ENCODE measurements at regions of chr5 and their contacts with region 1.

Region 1: DNA sequence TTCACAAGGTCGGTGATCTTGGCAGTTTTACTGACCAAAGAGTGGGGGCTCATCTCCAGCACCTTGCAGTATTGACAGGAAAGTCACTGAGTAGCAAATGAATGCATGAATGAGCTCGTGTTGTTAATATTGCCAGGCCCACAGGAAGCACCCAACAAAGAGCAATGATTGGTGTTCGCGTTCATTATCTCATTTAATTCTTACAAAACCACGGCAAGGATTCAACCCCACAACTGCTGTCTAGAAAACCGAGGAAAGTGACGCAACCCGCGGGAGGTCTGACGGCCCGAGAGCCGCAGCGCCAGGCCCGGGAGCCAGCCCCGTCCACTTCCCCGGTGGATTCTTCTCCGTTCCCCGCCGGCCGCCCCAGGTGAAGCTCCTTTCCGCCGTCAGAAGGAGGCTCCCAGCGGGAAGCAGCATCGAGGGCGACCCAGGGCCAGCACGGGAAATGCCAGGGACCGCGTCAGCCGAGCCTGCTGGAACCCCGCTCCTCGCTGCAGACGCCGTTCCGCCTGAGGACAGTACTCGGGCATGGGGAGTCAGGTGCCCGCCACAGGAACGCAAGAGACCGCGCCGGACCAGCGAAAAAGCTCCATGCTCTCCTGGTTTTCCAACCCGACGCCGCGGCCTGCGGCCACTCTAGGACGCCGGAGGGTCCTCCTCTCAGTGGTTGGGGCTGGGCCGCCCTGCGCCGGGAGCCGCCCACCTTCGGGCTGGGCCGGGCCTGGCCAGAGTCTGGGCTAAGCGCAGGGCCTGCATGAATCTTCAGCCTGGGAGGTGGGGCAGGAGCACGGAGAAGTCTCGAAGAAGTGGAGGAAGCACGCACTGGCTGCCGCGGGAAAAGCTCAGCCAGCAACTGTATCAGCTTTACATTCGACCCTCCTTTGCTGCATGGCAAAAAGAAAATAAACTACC is 19.8 kb upstream of the FER start:
- DNase-seq: peak; percentile 39
- H3K4me3 Mint-ChIP-seq: peak overlapping the region; percentile 69
- H3K27ac Mint-ChIP-seq: no peak overlapping the region
- H3K4me1 Mint-ChIP-seq: peaks cover 25% of the 10 kb centered on the region
- H3K27me3 Mint-ChIP-seq: peaks cover 46% of the 10 kb centered on the region

Region 2: DNA sequence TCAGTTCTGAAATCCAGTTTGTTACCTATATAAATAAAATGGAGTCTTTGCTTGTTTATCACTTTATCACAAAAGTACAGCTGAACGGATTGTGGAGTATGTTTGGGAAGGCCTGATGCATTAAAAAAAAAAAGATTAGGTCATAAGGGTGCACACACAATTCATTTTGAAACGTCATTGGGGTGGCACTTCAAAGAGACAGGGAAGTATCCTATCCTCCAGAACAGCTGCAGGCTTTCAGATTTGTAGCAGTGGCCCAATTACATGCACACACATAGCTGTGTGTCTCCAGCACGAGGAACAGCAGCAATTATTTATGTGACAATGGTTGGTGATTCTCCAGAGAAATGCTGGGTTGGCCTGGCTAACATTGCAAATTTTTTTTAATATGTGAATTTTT is 27.0 kb before region 1 on chr5:
- CTCF ChIA-PET with region 1: no interaction called
- POLR2A ChIA-PET with region 1: no interaction called
- DNase-seq: no peak
- H3K4me3 Mint-ChIP-seq: no peak overlapping the region
- H3K27ac Mint-ChIP-seq: no peak overlapping the region
- H3K4me1 Mint-ChIP-seq: no peaks in the 10 kb centered on the region
- H3K27me3 Mint-ChIP-seq: peaks cover 8% of the 10 kb centered on the region

Region 3: GRCh38 chr5:108748401-108749127 is 20.7 kb after region 1 on chr5:
- CTCF ChIA-PET with region 1: interaction called, 3 read pairs
- POLR2A ChIA-PET with region 1: interaction called, 22 read pairs
- DNase-seq: peak; percentile 98
- H3K4me3 Mint-ChIP-seq: peak overlapping the region; percentile 85
- H3K27ac Mint-ChIP-seq: peak overlapping the region; percentile 78
- H3K4me1 Mint-ChIP-seq: peaks cover 17% of the 10 kb centered on the region
- H3K27me3 Mint-ChIP-seq: peaks cover 10% of the 10 kb centered on the region